ENCODE measurements at regions of chr17 and their contacts with region 1.

Region 1: GRCh38 chr17:19513897-19514488 is 19.7 kb upstream of the SLC47A1 start:
- DNase-seq: peak; percentile 30 to 81 (median 69)
- ATAC-seq: peak; percentile 70
- H3K4me3 ChIP-seq: no peak overlapping the region
- H3K4me3 Mint-ChIP-seq: no peak overlapping the region
- H3K27ac ChIP-seq: no peak overlapping the region
- H3K27ac Mint-ChIP-seq: no peak overlapping the region
- H3K4me1 ChIP-seq: no peaks in the 10 kb centered on the region
- H3K4me1 Mint-ChIP-seq: no peaks in the 10 kb centered on the region
- H3K27me3 ChIP-seq: no peaks in the 10 kb centered on the region
- H3K27me3 Mint-ChIP-seq: no peaks in the 10 kb centered on the region
- CTCF ChIP-seq: peak; percentile 89

Region 2: GRCh38 chr17:19744922-19745757 is 231.1 kb after region 1 on chr17:
- CTCF ChIA-PET with region 1: interaction called, 10 read pairs
- POLR2A ChIA-PET with region 1: no interaction called
- intact Hi-C with region 1: no loop called
- DNase-seq: peak; percentile 72 to 90 (median 85)
- ATAC-seq: peak; percentile 98
- H3K4me3 ChIP-seq: peak overlapping the region; percentile 26 to 31
- H3K4me3 Mint-ChIP-seq: peak overlapping the region; percentile 67
- H3K27ac ChIP-seq: no peak overlapping the region
- H3K27ac Mint-ChIP-seq: no peak overlapping the region
- H3K4me1 ChIP-seq: peaks cover 5% of the 10 kb centered on the region
- H3K4me1 Mint-ChIP-seq: peaks cover 8% of the 10 kb centered on the region
- H3K27me3 ChIP-seq: no peaks in the 10 kb centered on the region
- H3K27me3 Mint-ChIP-seq: peaks cover 11% of the 10 kb centered on the region
- CTCF ChIP-seq: peak; percentile 77

Region 3: DNA sequence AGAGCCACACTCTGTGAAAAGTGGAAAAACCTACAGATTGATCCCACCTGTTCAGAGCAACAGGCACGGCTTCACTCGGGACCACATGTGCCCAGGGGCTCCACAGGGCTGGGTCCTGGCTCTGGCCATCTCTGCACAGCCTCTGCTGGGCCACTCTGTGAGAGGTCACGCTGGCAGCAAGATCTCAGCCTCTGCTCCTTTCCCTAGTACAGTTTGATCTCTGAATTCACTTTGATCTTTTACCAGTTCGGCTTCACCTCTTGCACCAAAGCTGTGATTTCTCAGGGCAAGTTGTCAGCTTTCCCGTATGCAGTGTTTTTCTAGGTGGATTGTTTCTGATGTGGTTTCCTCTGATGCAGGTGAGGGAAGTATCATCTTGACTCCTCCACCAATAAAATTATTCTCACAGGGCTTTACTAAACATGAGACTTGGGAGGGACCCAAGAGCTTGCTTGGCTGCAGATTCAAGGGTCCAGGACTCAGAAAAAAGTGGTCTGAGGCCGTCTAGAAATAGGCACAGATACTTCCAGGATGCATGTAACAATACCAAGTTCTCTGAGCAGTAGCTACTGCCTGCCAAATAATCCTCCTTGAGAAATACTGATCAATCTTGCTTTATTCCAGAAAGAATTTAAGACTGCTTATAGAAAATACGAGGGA is 258.1 kb after region 1 on chr17:
- CTCF ChIA-PET with region 1: interaction called, 84 read pairs
- POLR2A ChIA-PET with region 1: interaction called, 4 read pairs
- intact Hi-C with region 1: no loop called
- DNase-seq: peak in 7 of 9 experiments; percentile 6 to 87 (median 51)
- ATAC-seq: peak; percentile 90
- H3K4me3 ChIP-seq: peak overlapping the region in 1 of 2 experiments; percentile 27
- H3K4me3 Mint-ChIP-seq: peak overlapping the region; percentile 49
- H3K27ac ChIP-seq: peak overlapping the region in 1 of 2 experiments; percentile 30
- H3K27ac Mint-ChIP-seq: peak overlapping the region; percentile 89
- H3K4me1 ChIP-seq: peaks cover 37% of the 10 kb centered on the region
- H3K4me1 Mint-ChIP-seq: peaks cover 43% of the 10 kb centered on the region
- H3K27me3 ChIP-seq: no peaks in the 10 kb centered on the region
- H3K27me3 Mint-ChIP-seq: no peaks in the 10 kb centered on the region
- CTCF ChIP-seq: no peak

Measured in CD8-positive, alpha-beta T cell (primary cell).